Natural killer cell (primary cell): ENCODE measurements at regions of chr10 and their contacts with region 1.

Region 1: DNA sequence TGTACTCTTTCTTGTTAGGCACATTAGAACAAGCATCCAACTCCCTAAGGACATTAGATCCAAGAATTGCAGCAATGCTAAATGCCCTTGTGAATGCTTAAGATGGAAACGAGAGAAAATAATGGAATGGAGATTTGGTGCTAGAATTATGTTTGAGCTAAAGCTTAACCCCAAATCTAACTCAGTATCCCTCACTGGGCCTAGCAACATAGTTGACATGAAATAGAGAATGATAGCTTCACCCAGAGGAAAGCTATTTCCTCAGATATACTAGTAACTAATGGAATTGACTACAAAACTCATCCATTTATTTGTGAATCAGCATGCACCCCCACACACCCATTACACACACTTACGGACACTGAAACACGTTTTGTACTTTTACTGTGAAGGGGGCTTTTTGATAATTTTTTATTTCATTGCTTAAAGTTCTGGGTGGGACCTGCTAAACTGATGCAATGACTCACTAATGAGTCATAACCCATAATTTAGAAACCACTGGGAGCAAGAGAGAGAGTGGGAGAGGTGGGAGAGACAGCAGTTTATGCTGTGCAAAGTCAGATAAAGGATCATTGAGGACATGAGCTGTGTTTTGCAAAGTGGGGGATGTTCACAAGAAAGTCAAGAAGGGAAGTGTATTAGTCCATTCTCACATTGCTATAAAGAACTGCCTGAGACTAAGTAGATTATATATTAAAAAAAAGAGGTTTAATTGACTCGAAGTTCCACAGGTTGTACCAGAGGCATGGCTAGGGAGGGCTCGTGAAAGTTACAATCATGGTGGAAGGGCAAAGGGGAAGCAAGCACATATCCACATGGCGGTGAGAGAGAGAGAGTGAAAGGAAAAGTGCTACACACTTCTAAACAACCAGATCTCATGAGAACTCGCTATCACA is 382.7 kb downstream of the SFMBT2 start:
- DNase-seq: peak in 1 of 2 donors; percentile 32
- ATAC-seq: peak in 2 of 3 donors; percentile 15 to 48
- H3K4me3 ChIP-seq: no peak overlapping the region
- H3K4me3 Mint-ChIP-seq: peak overlapping the region; percentile 90
- H3K27ac ChIP-seq: peak overlapping the region; percentile 93
- H3K27ac Mint-ChIP-seq: peak overlapping the region; percentile 93
- H3K4me1 ChIP-seq: peaks cover 50% of the 10 kb centered on the region
- H3K4me1 Mint-ChIP-seq: peaks cover 75 to 80% of the 10 kb centered on the region in 2 donors
- H3K27me3 ChIP-seq: no peaks in the 10 kb centered on the region
- H3K27me3 Mint-ChIP-seq: no peaks in the 10 kb centered on the region
- CTCF ChIP-seq: no peak

Region 2: GRCh38 chr10:6995831-6996230 is 32.3 kb before region 1 on chr10:
- intact Hi-C with region 1: loop called (anchors 2 kb)
- DNase-seq: no peak
- ATAC-seq: no peak
- H3K4me3 ChIP-seq: no peak overlapping the region
- H3K4me3 Mint-ChIP-seq: no peak overlapping the region
- H3K27ac ChIP-seq: no peak overlapping the region
- H3K27ac Mint-ChIP-seq: no peak overlapping the region
- H3K4me1 ChIP-seq: peaks cover 35% of the 10 kb centered on the region
- H3K4me1 Mint-ChIP-seq: peaks cover 44 to 48% of the 10 kb centered on the region in 2 donors
- H3K27me3 ChIP-seq: no peaks in the 10 kb centered on the region
- H3K27me3 Mint-ChIP-seq: no peaks in the 10 kb centered on the region
- CTCF ChIP-seq: no peak

Region 3: GRCh38 chr10:7045891-7046599 is 17.9 kb after region 1 on chr10:
- intact Hi-C with region 1: loop called (anchors 1 kb)
- DNase-seq: peak; percentile 29 to 68
- ATAC-seq: peak; percentile 70 to 87 (median 86)
- H3K4me3 ChIP-seq: no peak overlapping the region
- H3K4me3 Mint-ChIP-seq: peak overlapping the region; percentile 62
- H3K27ac ChIP-seq: peak overlapping the region; percentile 71
- H3K27ac Mint-ChIP-seq: peak overlapping the region; percentile 83 to 85
- H3K4me1 ChIP-seq: peaks cover 74% of the 10 kb centered on the region
- H3K4me1 Mint-ChIP-seq: peaks cover 75 to 76% of the 10 kb centered on the region in 2 donors
- H3K27me3 ChIP-seq: no peaks in the 10 kb centered on the region
- H3K27me3 Mint-ChIP-seq: no peaks in the 10 kb centered on the region
- CTCF ChIP-seq: no peak

Region 4: DNA sequence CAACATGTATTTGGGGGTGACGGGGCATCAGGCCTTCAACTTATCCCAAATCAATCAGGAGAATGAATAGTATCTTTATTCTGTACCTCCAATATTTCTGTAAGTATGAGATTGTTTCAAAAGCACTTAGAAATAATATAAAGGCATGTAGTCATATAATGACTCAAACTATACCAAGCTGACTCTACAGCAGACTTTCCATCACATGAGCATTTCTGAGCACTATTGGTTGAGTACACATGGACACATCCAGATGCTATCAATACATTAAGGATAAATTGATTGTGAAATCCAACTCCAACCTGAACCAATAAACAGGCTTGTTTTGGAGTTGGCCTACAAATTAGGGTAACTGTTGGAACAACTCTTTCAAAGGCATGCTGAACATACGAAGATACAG is 153.3 kb after region 1 on chr10:
- intact Hi-C with region 1: no loop called
- DNase-seq: no peak
- ATAC-seq: no peak
- H3K4me3 ChIP-seq: no peak overlapping the region
- H3K4me3 Mint-ChIP-seq: no peak overlapping the region
- H3K27ac ChIP-seq: no peak overlapping the region
- H3K27ac Mint-ChIP-seq: no peak overlapping the region
- H3K4me1 ChIP-seq: peaks cover 3% of the 10 kb centered on the region
- H3K4me1 Mint-ChIP-seq: peaks cover 22 to 23% of the 10 kb centered on the region in 2 donors
- H3K27me3 ChIP-seq: no peaks in the 10 kb centered on the region
- H3K27me3 Mint-ChIP-seq: no peaks in the 10 kb centered on the region
- CTCF ChIP-seq: no peak

Region 5: DNA sequence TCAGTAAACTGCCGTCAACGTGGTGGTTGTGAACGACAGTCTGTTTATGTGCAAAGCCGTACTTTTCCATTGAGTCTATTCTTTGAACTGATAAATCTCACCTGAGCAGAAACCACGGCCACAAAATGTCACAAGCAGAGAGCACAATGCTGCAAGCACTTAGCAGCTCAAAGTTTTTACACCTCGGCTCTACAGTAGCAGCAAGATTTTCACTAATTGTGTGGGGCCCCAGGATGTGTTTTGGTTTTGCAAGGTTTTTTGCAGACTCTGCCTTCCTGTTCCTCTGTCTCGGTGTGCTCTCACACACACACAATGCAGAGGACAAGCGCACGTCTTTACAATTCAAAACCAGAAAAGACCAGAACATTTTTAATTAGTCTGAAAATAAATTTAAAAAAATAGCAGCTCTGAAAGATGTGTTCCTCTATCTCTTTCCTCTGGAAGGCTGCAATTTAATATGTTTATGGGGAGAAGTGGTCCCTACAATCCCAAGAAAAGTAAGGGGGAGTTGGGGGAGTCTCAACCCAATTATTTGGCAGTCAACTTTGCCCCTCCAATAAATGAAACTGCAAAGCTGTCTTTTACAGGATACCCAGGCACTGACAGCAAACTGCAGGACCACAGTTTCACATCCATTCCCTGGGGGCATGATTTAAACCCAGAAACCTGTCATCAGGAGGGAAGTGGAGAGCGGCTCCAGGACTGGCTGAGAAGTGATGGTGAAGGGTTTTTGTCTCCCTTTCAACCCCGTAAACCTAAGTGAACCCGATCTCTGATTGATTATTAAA is 456.5 kb after region 1 on chr10:
- intact Hi-C with region 1: loop called (anchors 1 kb)
- DNase-seq: peak; percentile 54 to 87
- ATAC-seq: peak; percentile 77 to 95 (median 86)
- H3K4me3 ChIP-seq: peak overlapping the region; percentile 7
- H3K4me3 Mint-ChIP-seq: peak overlapping the region; percentile 85
- H3K27ac ChIP-seq: peak overlapping the region; percentile 77
- H3K27ac Mint-ChIP-seq: peak overlapping the region; percentile 97 to 99
- H3K4me1 ChIP-seq: peaks cover 63% of the 10 kb centered on the region
- H3K4me1 Mint-ChIP-seq: peaks cover 68 to 81% of the 10 kb centered on the region in 2 donors
- H3K27me3 ChIP-seq: no peaks in the 10 kb centered on the region
- H3K27me3 Mint-ChIP-seq: no peaks in the 10 kb centered on the region
- CTCF ChIP-seq: no peak